ENCODE measurements at regions of chr5 and their contacts with region 1.

Region 1: GRCh38 chr5:172777881-172778814 is 7.2 kb upstream of the DUSP1 start:
- DNase-seq: no peak
- ATAC-seq: peak; percentile 26 to 56 (median 50)
- H3K4me3 ChIP-seq: peak overlapping the region in 1 of 2 donors; percentile 6
- H3K4me3 Mint-ChIP-seq: peak overlapping the region; percentile 38 to 62 (median 59)
- H3K27ac ChIP-seq: peak overlapping the region; percentile 97
- H3K27ac Mint-ChIP-seq: peak overlapping the region; percentile 89 to 94
- H3K4me1 ChIP-seq: peaks cover 4 to 27% of the 10 kb centered on the region in 2 experiments
- H3K4me1 Mint-ChIP-seq: peaks cover 29 to 49% (median 37%) of the 10 kb centered on the region in 3 donors
- H3K27me3 ChIP-seq: no peaks in the 10 kb centered on the region
- H3K27me3 Mint-ChIP-seq: no peaks in the 10 kb centered on the region

Region 2: DNA sequence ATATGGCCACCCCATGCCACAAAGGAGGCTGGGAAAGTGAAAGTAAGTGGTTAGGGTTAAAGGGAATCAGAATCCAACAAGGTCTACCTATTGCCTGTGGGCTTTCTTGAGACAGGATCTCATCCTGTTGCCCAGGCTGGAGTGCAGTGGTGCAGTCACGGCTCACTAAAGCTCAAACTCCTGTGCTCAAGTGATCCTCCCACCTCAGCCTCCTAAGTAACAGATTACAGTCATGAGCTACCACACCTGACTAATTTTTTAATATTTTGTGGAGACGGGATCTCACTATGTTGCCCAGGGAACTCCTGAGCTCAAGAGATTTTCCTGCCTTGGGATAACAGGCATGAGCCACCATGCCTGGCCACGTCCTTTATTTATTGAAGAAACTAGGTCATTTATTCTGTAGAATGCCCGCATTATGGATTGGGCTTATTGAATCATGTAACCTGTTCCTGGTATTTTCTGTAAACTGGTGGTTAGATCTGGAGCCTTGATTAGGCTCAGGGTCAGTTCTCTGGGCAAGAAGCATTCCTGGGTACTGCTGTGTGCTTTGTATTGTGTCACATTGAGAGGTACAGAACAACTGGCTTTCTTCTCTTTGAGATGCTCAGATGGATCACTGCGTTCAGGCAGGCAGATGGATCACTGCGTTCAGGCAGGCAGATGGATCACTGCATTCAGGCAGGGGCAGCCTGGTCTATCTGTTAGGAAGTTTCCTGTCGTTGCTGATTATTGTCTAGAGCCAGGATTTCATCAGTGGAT is 97.5 kb after region 1 on chr5:
- CTCF ChIA-PET with region 1: interaction called in 1 of 2 experiments, 12 read pairs
- POLR2A ChIA-PET with region 1: no interaction called
- DNase-seq: no peak
- ATAC-seq: no peak
- H3K4me3 ChIP-seq: no peak overlapping the region
- H3K4me3 Mint-ChIP-seq: no peak overlapping the region
- H3K27ac ChIP-seq: no peak overlapping the region
- H3K27ac Mint-ChIP-seq: no peak overlapping the region
- H3K4me1 ChIP-seq: no peaks in the 10 kb centered on the region
- H3K4me1 Mint-ChIP-seq: peaks cover 17 to 30% (median 23%) of the 10 kb centered on the region in 3 donors
- H3K27me3 ChIP-seq: no peaks in the 10 kb centered on the region
- H3K27me3 Mint-ChIP-seq: no peaks in the 10 kb centered on the region

Measured in T-cell (primary cell).